WTC11 (cell line): ENCODE measurements at regions of chr2 and their contacts with region 1.

Region 1: GRCh38 chr2:84856787-84857186 is 24.1 kb downstream of the TRABD2A start:
- DNase-seq: no peak
- ATAC-seq: no peak
- H3K4me3 Mint-ChIP-seq: no peak overlapping the region
- H3K27ac Mint-ChIP-seq: no peak overlapping the region
- H3K4me1 Mint-ChIP-seq: peaks cover 30% of the 10 kb centered on the region
- H3K27me3 Mint-ChIP-seq: peaks cover 56% of the 10 kb centered on the region
- CTCF ChIP-seq: no peak

Region 2: GRCh38 chr2:84631047-84631446 is 225.7 kb before region 1 on chr2:
- CTCF ChIA-PET with region 1: interaction called, 12 read pairs
- POLR2A ChIA-PET with region 1: no interaction called
- DNase-seq: no peak
- ATAC-seq: peak; percentile 88
- H3K4me3 Mint-ChIP-seq: no peak overlapping the region
- H3K27ac Mint-ChIP-seq: peak overlapping the region; percentile 19; the same call in 1 of the 2 replicates
- H3K4me1 Mint-ChIP-seq: no peaks in the 10 kb centered on the region
- H3K27me3 Mint-ChIP-seq: no peaks in the 10 kb centered on the region
- CTCF ChIP-seq: peak; percentile 44

Region 3: DNA sequence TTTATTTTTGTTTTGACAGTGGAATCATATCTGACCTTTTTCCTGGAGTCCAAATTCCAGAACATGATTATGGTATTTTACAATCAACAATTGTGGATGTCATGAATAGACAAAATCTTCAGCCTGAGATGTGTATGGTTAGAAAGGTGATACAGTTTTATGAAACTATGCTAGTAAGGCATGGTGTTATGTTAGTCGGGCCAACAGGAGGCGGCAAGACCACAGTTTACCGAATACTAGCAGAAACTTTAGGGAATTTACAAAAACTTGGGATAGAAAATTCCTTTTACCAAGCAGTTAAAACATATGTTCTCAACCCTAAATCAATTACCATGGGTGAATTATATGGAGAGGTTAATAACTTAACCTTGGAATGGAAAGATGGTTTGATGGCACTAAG is 203.5 kb before region 1 on chr2:
- CTCF ChIA-PET with region 1: interaction called, 19 read pairs
- POLR2A ChIA-PET with region 1: no interaction called
- DNase-seq: no peak
- ATAC-seq: no peak
- H3K4me3 Mint-ChIP-seq: no peak overlapping the region
- H3K27ac Mint-ChIP-seq: no peak overlapping the region
- H3K4me1 Mint-ChIP-seq: peaks cover 5% of the 10 kb centered on the region; the same call in 1 of the 2 replicates
- H3K27me3 Mint-ChIP-seq: peaks cover 4% of the 10 kb centered on the region
- CTCF ChIP-seq: no peak

Region 4: GRCh38 chr2:84741296-84741765 is 115.5 kb before region 1 on chr2:
- CTCF ChIA-PET with region 1: interaction called, 47 read pairs
- POLR2A ChIA-PET with region 1: interaction called, 3 read pairs
- DNase-seq: peak; percentile 65
- ATAC-seq: peak; percentile 100
- H3K4me3 Mint-ChIP-seq: no peak overlapping the region
- H3K27ac Mint-ChIP-seq: no peak overlapping the region
- H3K4me1 Mint-ChIP-seq: peaks cover 4% of the 10 kb centered on the region; the same call in 1 of the 2 replicates
- H3K27me3 Mint-ChIP-seq: peaks cover 11% of the 10 kb centered on the region
- CTCF ChIP-seq: 0 out of 2 replicates have a peak, but pooled peaks have one; percentile 33

Region 5: DNA sequence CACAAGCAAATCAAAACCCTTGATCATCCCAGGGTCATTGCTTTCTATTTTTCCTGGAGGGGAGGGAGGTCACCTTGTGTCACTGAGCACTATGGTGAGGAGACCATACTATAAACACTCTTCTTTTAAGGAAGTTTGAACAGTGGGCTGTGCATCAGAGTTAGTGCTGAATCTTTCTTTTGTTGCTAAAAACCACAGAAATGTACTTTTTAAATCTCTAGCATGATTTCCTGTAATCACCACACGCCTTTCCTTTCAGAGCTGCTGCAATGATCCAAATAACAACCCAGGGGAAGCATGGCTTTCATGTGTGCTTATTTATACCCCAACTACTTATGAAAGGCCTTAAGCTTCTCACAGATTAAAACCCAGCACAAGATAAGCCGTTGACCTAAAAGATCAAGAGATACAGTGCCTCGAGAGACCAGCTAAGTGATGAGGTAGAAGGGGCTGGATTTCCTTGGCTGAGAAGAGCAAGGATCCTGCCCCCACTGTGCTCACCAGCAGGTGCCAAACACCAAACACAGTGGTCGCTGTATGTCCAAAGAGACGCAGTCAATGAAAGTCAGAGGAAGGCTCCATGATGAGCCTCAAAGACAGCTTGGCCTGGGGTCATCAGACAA is 10.6 kb before region 1 on chr2:
- CTCF ChIA-PET with region 1: interaction called, 10 read pairs
- POLR2A ChIA-PET with region 1: no interaction called
- DNase-seq: no peak
- ATAC-seq: no peak
- H3K4me3 Mint-ChIP-seq: no peak overlapping the region
- H3K27ac Mint-ChIP-seq: no peak overlapping the region
- H3K4me1 Mint-ChIP-seq: no peaks in the 10 kb centered on the region
- H3K27me3 Mint-ChIP-seq: no peaks in the 10 kb centered on the region
- CTCF ChIP-seq: no peak

Region 6: DNA sequence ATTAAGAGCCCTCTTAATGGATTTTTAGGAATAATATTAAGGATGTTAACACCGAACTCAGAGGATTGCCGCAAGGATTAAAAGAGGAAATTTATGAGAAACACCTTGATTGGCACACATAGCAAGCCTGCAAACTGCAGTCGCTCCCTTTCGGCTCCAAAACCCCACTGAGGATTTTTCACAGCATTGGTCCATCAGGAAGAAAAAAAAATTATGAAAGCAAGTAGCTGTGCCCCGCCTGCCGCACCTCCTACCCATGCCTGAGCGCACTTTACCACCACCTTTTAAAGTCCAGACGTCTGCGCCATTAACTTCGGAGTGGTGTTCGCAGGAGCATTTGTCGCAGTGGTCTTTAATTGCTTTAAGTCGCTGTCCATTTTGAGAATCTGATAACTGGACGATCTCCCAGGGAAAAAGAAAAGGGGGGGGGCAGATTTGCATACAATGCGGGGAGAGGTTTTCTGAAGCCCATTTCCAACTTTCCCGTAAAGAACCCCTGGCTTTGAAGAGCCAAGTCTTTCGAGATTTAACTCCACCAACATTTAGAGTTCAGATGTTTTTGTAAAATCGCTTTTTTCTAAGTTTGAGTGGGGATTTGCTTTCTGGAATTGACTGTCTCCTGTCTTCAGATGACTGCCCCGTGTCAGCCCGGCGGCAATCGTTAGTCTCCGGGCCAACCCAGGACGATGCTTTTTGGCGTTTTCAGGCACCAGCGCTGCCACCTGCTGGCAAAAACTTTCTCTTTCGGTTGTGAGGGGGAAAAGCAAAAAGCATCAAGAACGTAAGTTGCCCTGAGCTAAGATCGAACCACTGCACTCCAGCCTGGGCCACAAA is 25.0 kb after region 1 on chr2:
- CTCF ChIA-PET with region 1: interaction called, 22 read pairs
- POLR2A ChIA-PET with region 1: interaction called, 3 read pairs
- DNase-seq: peak; percentile 85
- ATAC-seq: peak; percentile 63
- H3K4me3 Mint-ChIP-seq: peak overlapping the region; percentile 72
- H3K27ac Mint-ChIP-seq: no peak overlapping the region
- H3K4me1 Mint-ChIP-seq: peaks cover 10% of the 10 kb centered on the region
- H3K27me3 Mint-ChIP-seq: peaks cover 88% of the 10 kb centered on the region
- CTCF ChIP-seq: peak; percentile 37; the same call in 1 of the 2 replicates